ENCODE measurements at regions of chr5 and their contacts with region 1.

Region 1: DNA sequence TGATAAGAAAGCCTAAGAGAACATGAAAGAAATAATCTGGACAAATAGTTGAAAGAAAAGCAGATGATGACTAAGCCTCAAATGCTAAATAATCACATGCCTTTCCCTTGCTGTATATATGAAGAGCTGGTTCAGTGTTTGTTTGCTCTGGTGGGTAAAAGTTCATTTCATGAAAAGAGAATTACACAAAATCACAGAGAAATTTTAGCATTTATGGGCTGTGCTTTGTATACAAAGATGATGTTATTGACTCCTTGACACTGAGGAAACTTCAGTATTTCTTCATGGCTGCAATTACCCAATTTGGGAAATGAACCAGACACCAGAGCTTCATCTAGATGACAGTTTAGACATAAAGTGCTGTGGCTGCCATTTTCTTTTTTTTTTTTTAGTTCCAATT is 527.2 kb downstream of the NR2F1-AS1 start:
- DNase-seq: no peak
- H3K4me3 ChIP-seq: no peak overlapping the region
- H3K27ac ChIP-seq: no peak overlapping the region
- H3K4me1 ChIP-seq: no peaks in the 10 kb centered on the region
- H3K27me3 ChIP-seq: no peaks in the 10 kb centered on the region
- CTCF ChIP-seq: no peak
- EP300 ChIP-seq: no peak
- POLR2A ChIP-seq: no peak

Region 2: GRCh38 chr5:92962752-92963151 is 91.1 kb before region 1 on chr5:
- intact Hi-C with region 1: no loop called
- DNase-seq: no peak
- H3K4me3 ChIP-seq: no peak overlapping the region
- H3K27ac ChIP-seq: no peak overlapping the region
- H3K4me1 ChIP-seq: no peaks in the 10 kb centered on the region
- H3K27me3 ChIP-seq: no peaks in the 10 kb centered on the region
- CTCF ChIP-seq: no peak
- EP300 ChIP-seq: no peak
- POLR2A ChIP-seq: no peak

Region 3: DNA sequence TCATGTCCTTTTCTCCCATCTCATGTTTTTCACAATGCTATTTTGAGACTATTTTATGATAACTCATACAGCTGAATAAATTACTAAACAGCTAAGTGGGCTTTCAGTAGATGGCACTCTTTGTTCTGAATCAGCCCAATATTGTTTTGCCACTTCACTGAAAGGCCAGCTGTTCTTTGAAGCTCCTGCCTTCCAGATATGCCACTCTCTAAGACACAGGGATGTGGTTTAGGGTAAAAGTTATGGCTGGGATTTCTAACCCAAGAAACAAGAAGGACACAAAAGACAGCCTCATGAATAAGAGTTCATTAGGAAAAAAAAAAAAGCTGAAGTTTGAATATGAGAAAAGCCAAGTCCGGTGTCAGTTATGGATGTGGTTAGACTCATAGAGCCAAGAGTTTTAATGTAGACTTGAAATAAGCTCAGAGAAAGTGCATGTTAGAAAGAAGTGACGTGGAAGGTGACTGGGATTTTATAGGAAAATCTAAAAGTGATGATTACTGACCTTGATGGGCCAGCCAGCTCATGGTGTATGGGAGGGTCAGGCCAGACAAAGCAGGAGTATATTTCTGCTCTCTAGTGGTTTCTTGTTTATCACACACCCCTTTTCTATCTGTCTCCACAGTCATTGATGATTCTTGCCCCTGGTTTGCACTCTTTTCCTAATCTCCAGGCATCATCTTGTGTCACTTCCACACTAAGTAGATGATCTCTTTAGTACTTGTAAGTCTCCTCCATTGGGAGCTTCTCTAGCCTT is 38.7 kb after region 1 on chr5:
- intact Hi-C with region 1: loop called in 1 of 4 experiments (anchors 1 kb)
- DNase-seq: no peak
- H3K4me3 ChIP-seq: no peak overlapping the region
- H3K27ac ChIP-seq: no peak overlapping the region
- H3K4me1 ChIP-seq: no peaks in the 10 kb centered on the region
- H3K27me3 ChIP-seq: no peaks in the 10 kb centered on the region
- CTCF ChIP-seq: peak in 1 of 3 donors; percentile 37
- EP300 ChIP-seq: no peak
- POLR2A ChIP-seq: no peak